ENCODE measurements at regions of chr16 and their contacts with region 1.

Region 1: GRCh38 chr16:19717771-19718602 is at the starts of genes IQCK and KNOP1:
- DNase-seq: peak; percentile 86
- H3K27ac ChIP-seq: peak within 1 kb of the TSS; percentile 91
- CTCF ChIP-seq: no peak

Region 2: DNA sequence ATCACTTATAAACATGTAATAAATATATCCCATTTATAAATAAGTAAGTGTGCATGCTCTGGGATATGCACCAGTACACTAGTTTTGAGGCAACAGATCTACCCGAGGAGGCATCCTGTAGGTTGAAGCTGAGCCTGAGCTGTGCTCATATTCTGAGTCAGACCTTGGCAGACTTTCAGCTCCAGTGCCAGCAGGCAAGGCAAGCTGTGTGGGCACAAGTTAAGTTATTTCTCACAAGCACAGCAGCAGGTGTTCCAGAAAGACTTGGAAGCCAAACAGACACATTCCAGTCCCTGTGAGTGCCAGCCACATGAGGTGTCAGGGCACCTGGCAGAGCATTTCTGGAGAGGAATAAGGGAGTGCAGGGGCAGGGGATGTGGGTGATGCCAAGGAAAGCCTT is 433.8 kb before region 1 on chr16:
- CTCF ChIA-PET with region 1: no interaction called
- POLR2A ChIA-PET with region 1: no interaction called
- DNase-seq: peak; percentile 73
- H3K27ac ChIP-seq: peak overlapping the region; percentile 59
- CTCF ChIP-seq: no peak

Region 3: DNA sequence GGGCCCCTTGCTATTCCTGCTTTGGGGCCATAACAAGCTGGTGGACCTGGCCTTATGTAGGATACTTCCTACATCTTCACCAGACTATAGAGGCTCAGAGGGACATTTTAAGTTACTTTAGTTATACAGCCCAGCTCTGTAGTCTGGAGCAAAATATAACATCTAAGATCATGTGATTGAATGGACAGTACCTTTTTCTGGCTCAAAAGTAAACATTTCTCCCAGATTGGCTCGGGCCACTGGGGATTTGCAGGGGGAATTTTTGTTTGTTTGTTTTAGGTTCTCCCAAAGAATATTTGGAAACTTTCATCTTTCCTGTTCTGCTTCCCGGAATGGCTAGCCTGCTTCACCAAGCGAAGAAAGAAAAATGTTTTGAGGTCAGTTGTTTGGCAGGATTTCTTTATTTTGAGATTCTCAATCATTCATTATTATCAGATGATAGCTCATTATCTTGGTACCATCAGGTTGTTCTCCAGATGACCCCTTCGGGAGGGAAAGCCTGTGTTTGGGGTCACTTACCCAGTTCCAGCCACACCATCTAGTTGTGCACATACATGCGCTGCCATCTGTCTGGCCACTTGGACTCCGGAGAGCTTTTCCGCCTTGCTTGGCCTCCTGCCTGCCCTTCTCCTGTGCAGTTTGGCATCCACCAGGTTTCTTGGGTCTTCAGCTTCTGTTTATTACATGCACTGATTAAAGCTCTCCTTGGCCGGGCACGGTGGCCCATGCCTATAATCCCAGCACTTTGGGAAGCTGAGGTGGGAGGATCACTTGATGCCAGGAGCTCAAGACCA is 17.3 kb after region 1 on chr16:
- CTCF ChIA-PET with region 1: no interaction called
- POLR2A ChIA-PET with region 1: interaction called, 11 read pairs
- DNase-seq: no peak
- H3K27ac ChIP-seq: no peak overlapping the region
- CTCF ChIP-seq: no peak

Measured in RWPE1 (cell line).